Right ventricle myocardium inferior (tissue), 1 donor: ENCODE measurements at regions of chr3 and their contacts with region 1.

Region 1: DNA sequence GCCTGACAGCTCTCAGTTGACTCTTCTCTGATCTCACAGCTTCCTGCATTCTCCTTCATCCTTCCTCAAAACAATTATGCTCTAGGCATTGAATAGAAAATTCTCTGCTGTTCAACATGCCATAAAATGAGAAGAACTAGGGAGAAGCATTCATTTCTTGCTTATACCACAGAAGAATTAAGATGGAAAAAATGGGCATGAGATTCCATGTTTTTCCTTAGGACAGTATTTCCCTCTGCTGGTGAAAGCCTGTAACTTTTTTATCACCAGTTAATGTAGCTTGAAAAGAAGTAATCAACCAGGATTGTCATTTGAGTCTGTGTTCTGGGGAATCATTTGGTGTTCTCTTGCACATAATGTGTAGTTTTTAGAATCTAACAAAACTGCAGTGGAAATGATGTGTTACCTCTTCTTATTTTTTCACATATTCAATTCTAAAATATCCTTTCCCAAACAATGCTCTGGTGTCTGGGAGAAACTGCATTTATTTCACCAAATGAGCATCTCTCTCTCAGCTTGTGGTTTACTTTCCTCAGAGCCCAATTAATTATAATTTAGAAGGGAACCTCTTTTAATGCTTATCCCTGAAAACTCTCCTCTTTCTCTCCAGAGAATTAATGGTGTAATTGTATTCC is 92.8 kb upstream of the DCBLD2 start:
- DNase-seq: no peak
- ATAC-seq: no peak

Region 2: DNA sequence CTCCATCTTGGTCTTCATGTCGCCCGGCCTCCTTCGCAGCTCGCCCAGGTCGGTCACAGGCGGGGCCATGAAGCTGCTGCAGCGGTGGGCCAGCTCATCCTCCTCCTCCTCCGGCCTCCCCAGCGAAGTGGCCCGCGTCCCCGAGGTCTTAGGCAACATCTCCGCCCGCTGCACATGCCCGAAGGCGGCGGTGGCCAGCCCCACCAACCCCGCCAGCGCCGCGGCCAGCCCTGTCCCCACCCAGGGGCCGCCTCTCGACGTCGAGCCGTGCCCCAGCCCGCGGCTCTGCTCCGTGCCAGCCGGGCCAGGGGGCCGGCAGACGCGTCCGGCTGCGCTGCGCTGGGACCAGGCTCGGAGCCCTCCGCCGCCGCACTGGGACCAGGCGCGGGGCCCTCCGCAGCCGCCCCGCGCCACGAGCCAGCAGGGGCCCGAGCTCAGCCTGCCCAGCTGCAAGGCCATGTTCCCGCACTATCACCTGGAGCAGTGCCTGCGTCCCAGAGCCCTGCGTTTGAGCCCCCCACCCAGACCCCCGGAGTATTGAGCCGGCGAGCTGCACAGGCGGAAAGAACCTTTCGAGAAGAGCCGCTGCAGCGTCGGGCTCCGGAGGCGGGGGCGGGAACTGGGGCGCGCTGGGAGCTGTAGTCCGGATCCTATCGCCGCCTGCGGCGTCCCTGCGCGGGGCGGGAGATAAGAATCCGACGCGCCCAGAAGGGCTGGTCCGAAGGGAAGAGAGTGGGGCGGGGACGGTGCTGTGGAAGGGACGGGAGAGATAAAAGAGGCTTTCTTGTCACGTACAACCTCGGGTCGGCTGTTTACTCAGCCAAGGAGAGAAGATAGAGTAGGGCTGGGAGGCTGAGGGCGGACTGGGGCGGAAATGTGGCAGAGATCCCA is 401.0 kb before region 1 on chr3 and contains the start of gene CPOX:
- intact Hi-C with region 1: loop called (anchors 5 kb)
- DNase-seq: peak; percentile 96
- ATAC-seq: peak; percentile 98
- total RNA-seq, gene CPOX: 11.8 TPM

Region 3: DNA sequence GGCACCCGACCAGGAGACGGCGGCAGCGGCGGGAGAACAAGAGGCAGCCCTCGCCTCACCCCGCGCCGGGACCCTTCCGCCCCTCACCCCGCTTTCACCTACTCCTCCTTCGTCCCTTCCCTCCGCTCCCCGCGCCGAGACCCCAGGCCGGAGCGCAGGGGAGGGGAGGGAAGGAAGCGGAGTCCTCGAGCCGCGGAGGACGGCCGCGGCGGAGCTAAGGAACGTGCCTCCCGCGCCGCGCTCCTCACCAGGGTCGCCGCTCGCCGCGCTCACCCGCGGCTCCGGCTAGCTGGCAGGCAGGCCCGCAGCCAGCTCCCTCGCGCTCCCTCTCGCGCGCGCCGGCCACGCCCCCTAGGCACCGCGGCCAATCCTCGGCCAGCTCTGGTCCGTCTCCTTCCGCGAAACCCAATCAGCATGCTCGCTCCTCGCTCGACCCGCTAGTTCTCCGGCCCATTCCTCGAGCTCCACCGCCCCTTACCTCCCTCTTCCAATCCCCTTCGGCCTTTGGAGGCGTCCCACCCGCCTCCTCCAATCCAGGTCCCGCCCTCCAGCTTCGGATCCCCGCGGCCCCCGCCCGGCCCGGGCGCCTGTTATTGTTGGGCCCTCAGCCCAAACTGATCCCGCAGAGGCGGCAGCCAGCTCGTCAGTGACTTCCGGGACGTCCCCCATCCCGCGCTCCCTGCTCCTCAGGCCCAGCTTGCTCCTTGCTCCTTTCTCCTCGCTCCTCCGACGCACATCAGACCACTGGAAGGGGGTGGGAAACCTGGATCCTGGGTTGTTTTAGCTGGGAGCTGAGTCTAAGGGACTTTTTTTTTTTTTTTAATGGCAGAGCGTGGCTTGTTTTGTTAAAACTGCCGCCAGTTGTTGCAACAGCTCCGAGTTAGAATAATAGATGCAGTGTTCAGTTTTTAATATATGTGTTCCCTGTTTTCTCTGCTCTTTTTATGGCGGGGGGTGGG is 92.6 kb before region 1 on chr3 and contains the start of gene DCBLD2:
- intact Hi-C with region 1: loop called (anchors 5 kb)
- DNase-seq: peak; percentile 97
- ATAC-seq: peak; percentile 98
- total RNA-seq, gene DCBLD2: 34.7 TPM

Region 4: GRCh38 chr3:99774467-99774866 is 780.2 kb after region 1 on chr3:
- intact Hi-C with region 1: no loop called
- DNase-seq: no peak
- ATAC-seq: no peak